ENCODE measurements at regions of chr18 and their contacts with region 1.

Region 1: DNA sequence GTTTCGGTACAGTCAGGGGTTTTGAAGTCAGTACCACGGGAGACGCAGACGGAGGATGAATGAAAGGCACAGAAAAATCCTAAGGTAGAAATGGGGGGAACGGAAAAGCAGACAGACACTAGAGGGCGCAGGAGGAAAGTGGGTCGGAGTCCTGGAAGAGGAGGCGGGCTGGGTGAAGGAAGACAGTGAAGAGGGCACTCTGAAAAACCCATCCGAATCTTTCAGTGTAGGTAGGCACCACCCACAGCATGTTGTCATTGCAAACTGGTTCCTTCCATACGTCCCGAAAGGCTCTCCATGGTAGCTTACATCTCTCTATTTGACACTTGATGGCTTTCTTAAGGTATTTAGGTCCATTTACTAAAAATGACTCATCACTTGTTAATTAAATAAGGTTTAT is 18.5 kb upstream of the ZNF236 start:
- DNase-seq: peak; percentile 32 to 54 (median 41)
- H3K4me3 ChIP-seq: no peak overlapping the region
- H3K4me3 Mint-ChIP-seq: peak overlapping the region in 1 of 2 donors; percentile 78
- H3K27ac ChIP-seq: no peak overlapping the region
- H3K27ac Mint-ChIP-seq: no peak overlapping the region
- H3K4me1 ChIP-seq: peaks cover 11% of the 10 kb centered on the region in 2 donors
- H3K4me1 Mint-ChIP-seq: peaks cover 17% of the 10 kb centered on the region
- H3K27me3 ChIP-seq: peaks cover 0 to 16% of the 10 kb centered on the region in 2 donors
- H3K27me3 Mint-ChIP-seq: peaks cover 0 to 33% (median 27%) of the 10 kb centered on the region in 3 donors
- CTCF ChIP-seq: peak; percentile 89

Region 2: GRCh38 chr18:76982841-76983587 is 179.2 kb after region 1 on chr18:
- intact Hi-C with region 1: loop called in 1 of 2 experiments (anchors 10 kb)
- DNase-seq: peak; percentile 53 to 68 (median 62)
- H3K4me3 ChIP-seq: no peak overlapping the region
- H3K4me3 Mint-ChIP-seq: no peak overlapping the region
- H3K27ac ChIP-seq: no peak overlapping the region
- H3K27ac Mint-ChIP-seq: peak overlapping the region in 1 of 7 donors; percentile 50
- H3K4me1 ChIP-seq: peaks cover 10 to 11% of the 10 kb centered on the region in 2 donors
- H3K4me1 Mint-ChIP-seq: peaks cover 13% of the 10 kb centered on the region
- H3K27me3 ChIP-seq: no peaks in the 10 kb centered on the region
- H3K27me3 Mint-ChIP-seq: peaks cover 1 to 6% (median 2%) of the 10 kb centered on the region in 3 donors
- CTCF ChIP-seq: peak; percentile 96

Region 3: GRCh38 chr18:77645170-77645872 is 841.5 kb after region 1 on chr18:
- intact Hi-C with region 1: loop called (anchors 10 kb)
- DNase-seq: no peak
- H3K4me3 ChIP-seq: no peak overlapping the region
- H3K4me3 Mint-ChIP-seq: no peak overlapping the region
- H3K27ac ChIP-seq: no peak overlapping the region
- H3K27ac Mint-ChIP-seq: no peak overlapping the region
- H3K4me1 ChIP-seq: no peaks in the 10 kb centered on the region
- H3K4me1 Mint-ChIP-seq: no peaks in the 10 kb centered on the region
- H3K27me3 ChIP-seq: no peaks in the 10 kb centered on the region
- H3K27me3 Mint-ChIP-seq: peaks cover 1 to 5% (median 4%) of the 10 kb centered on the region in 3 donors
- CTCF ChIP-seq: no peak

Region 4: DNA sequence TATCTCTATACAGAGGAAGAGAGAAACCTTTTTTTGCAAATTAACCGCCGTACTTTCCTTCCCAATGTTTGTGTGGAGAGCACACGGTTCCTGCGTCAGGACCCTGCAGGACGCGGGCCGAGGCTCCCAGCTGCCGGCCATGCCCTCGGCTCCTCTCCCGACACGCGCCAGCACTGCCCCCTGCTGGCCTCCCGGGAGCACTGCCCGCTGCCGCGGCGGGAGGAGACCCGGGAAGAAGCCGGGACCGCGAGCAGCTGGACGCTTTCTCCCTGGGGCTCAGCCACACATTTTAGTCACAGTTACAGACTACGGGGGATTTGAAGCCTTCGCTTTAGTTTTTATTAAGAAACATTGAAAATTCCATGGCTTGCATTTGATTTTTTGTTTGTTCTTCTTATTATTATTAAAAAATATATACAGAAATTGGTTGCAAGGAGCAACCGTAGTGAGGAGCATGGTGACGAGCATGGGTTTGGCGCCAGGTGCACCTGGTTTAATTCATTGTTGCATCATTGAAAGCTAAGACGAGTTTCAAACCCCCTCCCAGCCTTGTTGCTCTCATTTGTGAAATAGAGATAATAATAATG is 847.1 kb after region 1 on chr18:
- intact Hi-C with region 1: loop called (anchors 10 kb)
- DNase-seq: peak; percentile 17 to 39 (median 28)
- H3K4me3 ChIP-seq: no peak overlapping the region
- H3K4me3 Mint-ChIP-seq: no peak overlapping the region
- H3K27ac ChIP-seq: no peak overlapping the region
- H3K27ac Mint-ChIP-seq: no peak overlapping the region
- H3K4me1 ChIP-seq: no peaks in the 10 kb centered on the region
- H3K4me1 Mint-ChIP-seq: no peaks in the 10 kb centered on the region
- H3K27me3 ChIP-seq: peaks cover 0 to 4% of the 10 kb centered on the region in 2 donors
- H3K27me3 Mint-ChIP-seq: peaks cover 0 to 12% (median 7%) of the 10 kb centered on the region in 3 donors
- CTCF ChIP-seq: peak; percentile 82

Measured in CD14-positive monocyte (primary cell).